ENCODE measurements at regions of chr4 and their contacts with region 1.

Region 1: DNA sequence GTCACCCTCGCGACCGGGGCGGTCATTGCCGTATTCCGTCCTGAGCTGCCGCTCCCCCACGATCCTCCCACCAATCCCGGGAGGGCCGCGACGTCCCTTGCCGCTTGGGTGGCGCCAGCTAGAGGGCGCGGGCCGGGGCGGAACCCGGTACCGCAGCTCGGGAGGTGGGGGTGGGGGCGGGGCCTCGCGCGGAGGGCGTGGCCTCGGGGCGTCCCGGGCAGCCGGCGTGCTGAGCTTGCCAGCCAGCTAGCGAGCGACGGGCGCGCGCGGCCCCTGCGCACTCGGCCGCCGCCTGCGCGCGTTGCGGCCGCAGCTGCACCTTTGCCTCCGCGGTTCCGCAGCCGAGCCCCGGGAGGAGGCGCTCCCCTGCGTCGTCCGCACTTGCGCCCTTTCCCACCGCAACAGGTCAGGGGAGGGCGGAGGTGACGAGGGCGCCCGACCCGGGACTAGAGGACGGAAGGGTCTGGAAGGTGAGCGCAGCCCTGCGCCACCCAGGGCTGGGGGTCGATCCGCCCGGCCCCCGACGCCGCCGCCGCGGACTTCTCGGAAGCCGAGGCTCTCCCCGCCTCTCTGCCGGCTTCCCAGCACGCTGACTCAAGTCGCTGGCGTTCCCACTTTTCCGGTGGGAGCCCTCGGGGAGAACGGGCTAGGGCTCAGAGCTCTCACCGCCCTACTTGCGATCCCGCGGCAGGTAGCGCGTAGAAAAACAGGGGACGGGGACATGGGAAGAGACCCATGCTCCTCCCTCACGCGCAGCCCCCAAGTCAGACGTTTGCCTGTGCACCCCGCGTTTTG is at the start of gene AFF1:
- DNase-seq: peak; percentile 94
- H3K4me3 Mint-ChIP-seq: peak within 1 kb of the TSS; percentile 90
- H3K27ac Mint-ChIP-seq: peak within 1 kb of the TSS; percentile 95
- H3K4me1 Mint-ChIP-seq: peaks cover 49% of the 10 kb centered on the region
- H3K27me3 Mint-ChIP-seq: no peaks in the 10 kb centered on the region
- total RNA-seq, gene AFF1: 46.1 to 50.8 TPM

Region 2: DNA sequence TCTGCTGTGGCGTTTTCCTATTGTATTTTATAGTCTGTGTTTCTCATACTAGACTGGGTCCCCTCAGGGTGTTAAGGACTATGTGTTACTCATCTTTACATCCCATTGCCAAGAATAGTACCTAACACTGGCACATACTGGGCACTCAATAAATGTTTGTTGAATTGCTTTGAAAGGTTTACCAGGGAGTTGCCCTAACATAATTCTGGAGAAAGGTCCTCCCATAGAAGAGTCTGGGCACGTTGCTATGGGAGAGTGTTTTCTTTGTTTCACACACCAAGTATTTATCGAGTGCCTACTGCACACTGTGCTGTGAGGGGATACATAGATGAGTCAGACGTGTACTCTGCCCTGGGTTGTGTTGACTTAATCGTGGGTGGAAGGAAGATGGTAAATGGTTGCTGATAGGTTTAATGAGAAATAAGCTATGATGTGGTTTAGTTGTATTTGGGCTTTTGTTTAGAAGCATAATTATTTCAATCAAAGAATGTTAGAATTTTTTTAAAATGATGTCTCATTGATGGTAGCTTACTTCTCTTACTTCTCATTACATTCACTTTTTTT is 42.7 kb after region 1 on chr4:
- CTCF ChIA-PET with region 1: no interaction called
- POLR2A ChIA-PET with region 1: interaction called, 6 read pairs
- intact Hi-C with region 1: loop called (anchors 1 kb)
- DNase-seq: peak; percentile 43
- H3K4me3 Mint-ChIP-seq: no peak overlapping the region
- H3K27ac Mint-ChIP-seq: peak overlapping the region; percentile 6
- H3K4me1 Mint-ChIP-seq: peaks cover 59% of the 10 kb centered on the region
- H3K27me3 Mint-ChIP-seq: no peaks in the 10 kb centered on the region

Region 3: GRCh38 chr4:87073199-87074120 is 138.5 kb after region 1 on chr4:
- CTCF ChIA-PET with region 1: interaction called, 6 read pairs
- POLR2A ChIA-PET with region 1: interaction called, 13 read pairs
- intact Hi-C with region 1: loop called (anchors 1 kb)
- DNase-seq: peak; percentile 80
- H3K4me3 Mint-ChIP-seq: peak overlapping the region; percentile 54
- H3K27ac Mint-ChIP-seq: peak overlapping the region; percentile 71
- H3K4me1 Mint-ChIP-seq: peaks cover 49% of the 10 kb centered on the region
- H3K27me3 Mint-ChIP-seq: no peaks in the 10 kb centered on the region

Region 4: GRCh38 chr4:87220094-87220822 is 285.3 kb after region 1 on chr4 and contains the start of gene KLHL8:
- CTCF ChIA-PET with region 1: interaction called, 3 read pairs
- POLR2A ChIA-PET with region 1: interaction called, 7 read pairs
- intact Hi-C with region 1: loop called (anchors 1 kb)
- DNase-seq: peak; percentile 92
- H3K4me3 Mint-ChIP-seq: peak within 1 kb of the TSS; percentile 89
- H3K27ac Mint-ChIP-seq: peak within 1 kb of the TSS; percentile 79
- H3K4me1 Mint-ChIP-seq: peaks cover 10% of the 10 kb centered on the region
- H3K27me3 Mint-ChIP-seq: no peaks in the 10 kb centered on the region
- total RNA-seq, gene KLHL8: 10.2 to 11.0 TPM

Region 5: DNA sequence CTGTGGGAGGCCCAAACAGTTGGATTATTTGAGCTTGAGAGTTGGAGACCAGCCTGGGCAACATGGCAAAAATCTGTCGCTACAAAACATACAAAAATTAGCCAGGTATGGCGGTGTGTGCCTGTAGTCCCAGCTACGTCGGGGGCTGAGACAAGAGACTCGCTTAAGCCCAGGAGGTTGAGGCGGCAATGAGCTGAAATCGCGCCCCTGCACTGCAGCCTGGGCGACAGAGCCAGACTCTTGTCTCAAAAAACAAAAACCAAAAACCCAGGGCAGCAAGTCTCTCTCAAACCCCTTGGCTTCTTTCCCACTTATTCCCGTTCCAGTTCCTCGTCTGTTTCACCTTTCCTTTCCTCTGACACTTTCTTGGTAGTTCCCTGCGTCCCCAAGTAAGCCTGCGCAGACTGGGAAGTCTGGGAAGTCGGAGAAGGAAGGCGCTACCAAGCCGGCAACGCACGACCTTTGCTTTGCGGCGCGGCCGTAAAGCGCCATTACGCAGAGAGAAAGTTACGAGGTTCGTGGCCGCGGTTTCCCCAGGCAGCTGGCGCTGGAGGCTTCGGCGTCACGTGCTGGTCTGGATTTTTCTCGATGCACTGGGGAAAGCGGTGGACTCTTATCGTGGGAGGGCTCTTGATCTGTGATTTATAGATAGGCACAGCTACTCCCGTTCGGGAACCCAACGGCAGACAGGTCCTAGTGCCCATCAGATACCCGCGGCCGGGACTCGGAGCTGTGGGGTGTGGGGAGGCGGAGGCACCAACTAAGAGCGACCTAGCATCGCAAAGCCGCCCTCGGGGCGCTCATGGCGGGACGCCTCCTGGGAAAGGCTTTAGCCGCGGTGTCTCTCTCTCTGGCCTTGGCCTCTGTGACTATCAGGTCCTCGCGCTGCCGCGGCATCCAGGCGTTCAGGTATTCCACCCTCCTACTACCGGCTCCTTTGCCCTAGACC is 487.4 kb after region 1 on chr4 and contains the start of gene NUDT9:
- CTCF ChIA-PET with region 1: no interaction called
- POLR2A ChIA-PET with region 1: no interaction called
- intact Hi-C with region 1: loop called (anchors 1 kb)
- DNase-seq: peak; percentile 92
- H3K4me3 Mint-ChIP-seq: peak within 1 kb of the TSS; percentile 97
- H3K27ac Mint-ChIP-seq: peak within 1 kb of the TSS; percentile 92
- H3K4me1 Mint-ChIP-seq: peaks cover 26% of the 10 kb centered on the region
- H3K27me3 Mint-ChIP-seq: no peaks in the 10 kb centered on the region
- total RNA-seq, gene NUDT9: 13.1 to 13.9 TPM

Measured in activated CD4-positive, alpha-beta memory T cell treated with anti-CD3 and anti-CD28 coated beads for 36 hours (primary cell).